ENCODE measurements at regions of chr14 and their contacts with region 1.

Region 1: GRCh38 chr14:35404449-35405303 is at the start of gene NFKBIA:
- DNase-seq: peak; percentile 83 to 95 (median 88)
- H3K4me3 ChIP-seq: peak within 1 kb of the TSS; percentile 58 to 94 (median 82)
- H3K27ac ChIP-seq: peak within 1 kb of the TSS; percentile 94 to 100 (median 99)
- H3K27me3 ChIP-seq: no peaks in the 10 kb centered on the region
- CTCF ChIP-seq: peak in 50 of 56 donors; percentile 16 to 72 (median 44)
- total RNA-seq, gene NFKBIA: 38.8 to 167 (median 81.3) TPM

Region 2: GRCh38 chr14:34982417-34983147 is 422.1 kb before region 1 on chr14 and contains the start of gene SRP54:
- intact Hi-C with region 1: loop called in 1 of 2 experiments (anchors 5 kb)
- DNase-seq: peak; percentile 93 to 99 (median 97)
- H3K4me3 ChIP-seq: peak within 1 kb of the TSS; percentile 69 to 100 (median 92)
- H3K27ac ChIP-seq: peak within 1 kb of the TSS; percentile 93 to 100 (median 99)
- H3K27me3 ChIP-seq: no peaks in the 10 kb centered on the region
- CTCF ChIP-seq: peak in 17 of 56 donors; percentile 1 to 35 (median 16)
- total RNA-seq, gene SRP54: 20.1 to 61.6 (median 44.8) TPM

Region 3: DNA sequence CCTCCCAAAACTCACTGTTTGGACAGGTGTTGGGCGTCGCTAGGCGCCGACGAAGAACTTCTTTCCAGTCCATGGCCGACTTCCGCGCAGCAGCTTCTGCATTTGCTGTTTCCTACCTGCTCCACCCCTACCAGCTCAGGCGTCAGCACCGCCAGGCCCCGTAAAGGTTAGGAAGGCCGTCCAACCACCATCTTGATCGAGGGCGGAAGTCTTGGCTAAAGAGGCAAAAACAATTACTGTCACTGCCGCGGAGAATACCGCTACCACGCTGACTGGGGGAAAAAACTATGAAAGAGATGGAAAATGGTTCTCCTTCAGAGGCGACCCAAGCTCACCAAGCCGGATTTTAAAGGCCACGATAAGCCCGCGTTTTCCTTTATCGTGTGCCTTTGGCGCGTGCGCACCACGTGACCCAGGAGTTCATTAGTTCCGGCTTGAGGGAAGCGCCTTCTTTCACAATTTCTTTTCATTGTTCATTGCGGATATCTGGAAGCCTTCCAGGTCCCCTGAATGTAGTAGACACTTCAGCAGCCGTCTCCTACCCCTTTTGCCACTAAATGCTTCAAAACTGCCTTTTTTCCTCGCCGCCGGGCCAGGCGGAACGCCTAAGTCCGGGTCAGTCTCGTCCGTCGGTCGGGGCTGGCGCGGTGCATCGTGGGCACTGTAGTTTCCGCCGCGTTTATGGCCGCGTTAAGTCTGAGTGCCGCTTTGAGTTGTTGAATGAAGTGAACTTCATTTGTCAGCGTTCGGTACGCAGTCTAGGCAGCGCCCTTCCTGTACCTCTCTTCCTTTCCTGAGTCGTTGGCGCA is 282.6 kb before region 1 on chr14 and contains the starts of genes PPP2R3C and PRORP:
- intact Hi-C with region 1: loop called in 1 of 2 experiments (anchors 5 kb)
- DNase-seq: peak; percentile 86 to 93 (median 90)
- H3K4me3 ChIP-seq: peak within 1 kb of the TSS; percentile 66 to 99 (median 87)
- H3K27ac ChIP-seq: peak within 1 kb of the TSS; percentile 92 to 99 (median 98)
- H3K27me3 ChIP-seq: no peaks in the 10 kb centered on the region
- CTCF ChIP-seq: peak in 10 of 56 donors; percentile 2 to 31 (median 16)
- total RNA-seq, gene PPP2R3C: 24.5 to 46.9 (median 33.9) TPM
- total RNA-seq, gene PRORP: 13.9 to 33.4 (median 22.8) TPM

Region 4: GRCh38 chr14:35292051-35292769 is 112.5 kb before region 1 on chr14 and contains the start of gene PSMA6:
- intact Hi-C with region 1: loop called (anchors 1 kb)
- DNase-seq: peak; percentile 99 to 100 (median 99)
- H3K4me3 ChIP-seq: peak within 1 kb of the TSS; percentile 65 to 99 (median 93)
- H3K27ac ChIP-seq: peak within 1 kb of the TSS; percentile 41 to 98 (median 89)
- H3K27me3 ChIP-seq: no peaks in the 10 kb centered on the region
- CTCF ChIP-seq: peak in 30 of 56 donors; percentile 6 to 56 (median 30)
- total RNA-seq, gene PSMA6: 60.5 to 148 (median 104) TPM

Region 5: GRCh38 chr14:35365130-35366055 is 39.3 kb before region 1 on chr14:
- intact Hi-C with region 1: no loop called
- DNase-seq: peak in 5 of 10 donors; percentile 44 to 84 (median 73)
- H3K4me3 ChIP-seq: no peak overlapping the region
- H3K27ac ChIP-seq: peak overlapping the region in 55 of 59 donors; percentile 8 to 90 (median 71)
- H3K27me3 ChIP-seq: no peaks in the 10 kb centered on the region
- CTCF ChIP-seq: no peak

Region 6: GRCh38 chr14:35385042-35385839 is 19.4 kb before region 1 on chr14:
- intact Hi-C with region 1: loop called in 1 of 2 experiments (anchors 1 kb)
- DNase-seq: peak; percentile 62 to 95 (median 82)
- H3K4me3 ChIP-seq: peak overlapping the region in 8 of 59 donors; percentile 6 to 31 (median 13)
- H3K27ac ChIP-seq: peak overlapping the region; percentile 70 to 97 (median 89)
- H3K27me3 ChIP-seq: no peaks in the 10 kb centered on the region
- CTCF ChIP-seq: peak in 2 of 56 donors; percentile 7 to 25